ENCODE measurements at regions of chr5 and their contacts with region 1.

Region 1: DNA sequence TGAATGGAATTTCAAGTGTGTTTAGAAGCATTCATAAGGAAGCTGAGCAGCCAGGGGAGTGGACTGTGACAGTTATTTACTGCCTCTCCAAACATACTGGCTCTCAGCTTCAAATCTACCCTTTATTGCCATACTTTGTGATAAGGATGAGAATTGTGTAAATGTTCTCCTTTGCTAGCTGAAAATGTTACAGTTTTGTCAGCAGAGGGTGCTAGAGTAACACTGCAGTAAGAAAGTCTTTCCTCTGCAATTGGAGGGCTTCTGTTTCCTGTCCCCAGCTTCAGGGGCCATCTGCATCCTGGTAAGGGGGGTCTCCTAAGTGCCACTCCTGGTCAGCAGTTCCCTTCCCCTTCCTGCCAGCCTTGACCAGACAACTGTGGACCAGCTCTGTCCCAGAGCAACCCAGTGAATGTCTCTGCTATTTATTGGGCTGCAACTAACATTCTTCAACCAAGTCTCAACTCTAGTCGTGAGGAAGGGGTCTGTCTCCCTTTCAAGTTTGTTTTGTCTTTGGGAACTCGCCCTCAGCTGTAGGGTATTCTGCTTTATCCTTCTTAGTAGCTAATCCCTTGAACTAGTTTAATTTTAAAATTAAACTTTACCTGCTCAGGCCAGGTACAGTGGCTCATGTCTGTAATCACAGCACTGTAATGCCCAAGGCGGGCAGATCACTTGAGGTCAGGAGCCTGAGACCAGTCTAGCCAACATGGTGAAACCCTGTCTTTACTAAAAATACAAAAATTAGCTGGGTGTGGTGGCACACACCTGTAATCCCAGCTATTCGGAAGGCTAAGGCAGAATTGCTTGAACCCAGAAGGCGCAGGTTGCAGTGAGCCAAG is 45.3 kb downstream of the RAPGEF6 start:
- DNase-seq: peak; percentile 38
- H3K4me3 ChIP-seq: no peak overlapping the region
- H3K27ac ChIP-seq: no peak overlapping the region
- H3K27me3 ChIP-seq: no peaks in the 10 kb centered on the region
- CTCF ChIP-seq: peak; percentile 95

Region 2: DNA sequence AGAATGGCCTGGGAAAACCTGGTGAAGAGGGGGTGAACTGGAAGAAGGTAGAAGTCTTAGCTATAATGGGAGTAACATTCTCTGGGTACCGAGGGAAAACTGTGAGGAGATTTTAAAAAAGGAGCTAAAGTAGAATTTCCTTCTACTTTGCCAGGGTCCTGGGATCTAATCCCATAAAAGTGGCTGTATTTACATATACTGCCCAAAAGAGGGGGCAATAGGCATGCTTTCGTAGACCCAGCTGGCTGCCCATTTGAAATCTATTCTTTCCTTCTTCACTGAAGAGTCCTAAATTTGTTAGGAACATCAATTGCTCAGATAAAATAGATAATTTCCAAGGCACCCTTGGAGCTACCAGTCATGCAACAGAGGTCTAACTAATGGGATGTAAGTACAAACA is 166.7 kb before region 1 on chr5:
- CTCF ChIA-PET with region 1: interaction called, 12 read pairs
- POLR2A ChIA-PET with region 1: no interaction called
- DNase-seq: peak; percentile 1
- H3K4me3 ChIP-seq: no peak overlapping the region
- H3K27ac ChIP-seq: no peak overlapping the region
- H3K27me3 ChIP-seq: no peaks in the 10 kb centered on the region
- CTCF ChIP-seq: peak; percentile 65

Region 3: DNA sequence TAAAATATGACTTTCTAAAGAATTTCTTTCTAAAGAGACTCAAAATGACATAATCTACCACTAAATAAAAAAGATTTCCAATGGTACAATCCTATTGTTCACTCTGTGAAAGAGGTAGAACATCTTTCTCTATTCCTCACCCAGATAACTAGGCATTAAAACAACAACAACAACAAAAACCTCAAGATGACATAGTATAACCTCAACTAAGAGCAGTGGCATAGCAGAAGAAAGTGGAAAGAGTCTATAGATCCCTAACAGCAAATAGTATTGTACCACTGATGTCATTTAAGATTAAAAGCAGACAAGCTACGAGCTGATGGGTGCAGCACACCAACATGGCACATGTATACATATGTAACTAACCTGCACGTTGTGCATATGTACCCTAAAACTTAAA is 15.4 kb after region 1 on chr5:
- CTCF ChIA-PET with region 1: interaction called, 18 read pairs
- POLR2A ChIA-PET with region 1: no interaction called
- DNase-seq: no peak
- H3K4me3 ChIP-seq: no peak overlapping the region
- H3K27ac ChIP-seq: no peak overlapping the region
- H3K27me3 ChIP-seq: no peaks in the 10 kb centered on the region
- CTCF ChIP-seq: no peak

Region 4: GRCh38 chr5:131615957-131616356 is 26.2 kb after region 1 on chr5:
- CTCF ChIA-PET with region 1: interaction called, 11 read pairs
- POLR2A ChIA-PET with region 1: interaction called, 3 read pairs
- DNase-seq: no peak
- H3K4me3 ChIP-seq: no peak overlapping the region
- H3K27ac ChIP-seq: no peak overlapping the region
- H3K27me3 ChIP-seq: no peaks in the 10 kb centered on the region
- CTCF ChIP-seq: no peak

Region 5: GRCh38 chr5:131640043-131640856 is 50.5 kb after region 1 on chr5:
- CTCF ChIA-PET with region 1: interaction called, 10 read pairs
- POLR2A ChIA-PET with region 1: no interaction called
- DNase-seq: no peak
- H3K4me3 ChIP-seq: no peak overlapping the region
- H3K27ac ChIP-seq: no peak overlapping the region
- H3K27me3 ChIP-seq: no peaks in the 10 kb centered on the region
- CTCF ChIP-seq: no peak

Region 6: GRCh38 chr5:132007399-132008165 is 417.9 kb after region 1 on chr5:
- CTCF ChIA-PET with region 1: interaction called, 179 read pairs
- POLR2A ChIA-PET with region 1: no interaction called
- DNase-seq: peak; percentile 37
- H3K4me3 ChIP-seq: no peak overlapping the region
- H3K27ac ChIP-seq: no peak overlapping the region
- H3K27me3 ChIP-seq: peaks cover 41% of the 10 kb centered on the region
- CTCF ChIP-seq: peak; percentile 76

Measured in AG04450 (cell line).